ENCODE measurements at regions of chr4 and their contacts with region 1.

Region 1: DNA sequence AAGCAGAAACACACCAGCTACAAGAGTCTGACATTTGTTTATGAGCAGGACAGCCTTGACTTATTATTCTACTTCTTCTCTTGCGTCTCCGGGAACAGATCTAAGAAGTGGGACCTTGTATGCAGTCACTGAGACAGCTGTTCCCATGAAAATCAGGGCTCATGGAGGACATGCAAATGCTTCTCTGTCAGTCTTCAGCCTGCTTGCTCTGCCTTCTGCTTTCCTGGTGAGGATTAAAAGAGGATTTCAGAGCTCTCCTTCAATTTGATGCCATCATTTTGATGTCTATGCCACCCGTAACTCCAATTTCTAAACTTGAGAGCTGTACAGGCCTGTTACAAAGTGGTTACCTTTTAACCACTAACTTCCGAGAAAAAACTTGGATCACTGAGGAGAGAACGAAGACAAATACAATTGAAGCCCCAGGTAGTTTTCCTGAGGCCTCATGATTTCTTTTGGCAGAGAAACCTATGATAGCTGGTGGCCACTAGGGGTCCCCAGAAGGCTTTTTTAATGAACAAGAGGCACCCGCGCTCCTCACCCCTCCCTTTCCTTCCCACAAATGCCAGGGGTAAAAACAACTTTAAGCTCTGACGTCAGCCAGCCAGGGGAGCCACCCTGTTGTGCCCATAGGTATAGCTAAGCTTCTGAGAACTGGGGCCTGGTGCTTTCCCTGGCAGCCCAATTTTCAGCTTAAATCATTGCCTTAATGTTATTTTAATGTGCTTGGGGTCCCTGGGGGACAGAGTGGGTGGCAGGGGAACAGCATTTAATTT is 97.0 kb downstream of the DDIT4L start:
- DNase-seq: peak; percentile 97
- H3K4me3 Mint-ChIP-seq: no peak overlapping the region
- H3K27ac Mint-ChIP-seq: peak overlapping the region; percentile 73
- H3K4me1 Mint-ChIP-seq: peaks cover 62% of the 10 kb centered on the region
- H3K27me3 Mint-ChIP-seq: peaks cover 2% of the 10 kb centered on the region

Region 2: GRCh38 chr4:98573791-98574190 is 1519.5 kb before region 1 on chr4:
- CTCF ChIA-PET with region 1: no interaction called
- intact Hi-C with region 1: no loop called
- DNase-seq: no peak
- H3K4me3 Mint-ChIP-seq: no peak overlapping the region
- H3K27ac Mint-ChIP-seq: no peak overlapping the region
- H3K4me1 Mint-ChIP-seq: peaks cover 42% of the 10 kb centered on the region
- H3K27me3 Mint-ChIP-seq: no peaks in the 10 kb centered on the region

Region 3: GRCh38 chr4:99998062-99998867 is 95.0 kb before region 1 on chr4:
- CTCF ChIA-PET with region 1: interaction called, 7 read pairs
- intact Hi-C with region 1: loop called (anchors 1 kb)
- DNase-seq: peak; percentile 10
- H3K4me3 Mint-ChIP-seq: no peak overlapping the region
- H3K27ac Mint-ChIP-seq: peak overlapping the region; percentile 59
- H3K4me1 Mint-ChIP-seq: peaks cover 11% of the 10 kb centered on the region
- H3K27me3 Mint-ChIP-seq: peaks cover 5% of the 10 kb centered on the region

Region 4: GRCh38 chr4:100302061-100303026 is 209.1 kb after region 1 on chr4:
- CTCF ChIA-PET with region 1: no interaction called
- intact Hi-C with region 1: loop called (anchors 5 kb)
- DNase-seq: no peak
- H3K4me3 Mint-ChIP-seq: no peak overlapping the region
- H3K27ac Mint-ChIP-seq: no peak overlapping the region
- H3K4me1 Mint-ChIP-seq: no peaks in the 10 kb centered on the region
- H3K27me3 Mint-ChIP-seq: peaks cover 2% of the 10 kb centered on the region

Region 5: DNA sequence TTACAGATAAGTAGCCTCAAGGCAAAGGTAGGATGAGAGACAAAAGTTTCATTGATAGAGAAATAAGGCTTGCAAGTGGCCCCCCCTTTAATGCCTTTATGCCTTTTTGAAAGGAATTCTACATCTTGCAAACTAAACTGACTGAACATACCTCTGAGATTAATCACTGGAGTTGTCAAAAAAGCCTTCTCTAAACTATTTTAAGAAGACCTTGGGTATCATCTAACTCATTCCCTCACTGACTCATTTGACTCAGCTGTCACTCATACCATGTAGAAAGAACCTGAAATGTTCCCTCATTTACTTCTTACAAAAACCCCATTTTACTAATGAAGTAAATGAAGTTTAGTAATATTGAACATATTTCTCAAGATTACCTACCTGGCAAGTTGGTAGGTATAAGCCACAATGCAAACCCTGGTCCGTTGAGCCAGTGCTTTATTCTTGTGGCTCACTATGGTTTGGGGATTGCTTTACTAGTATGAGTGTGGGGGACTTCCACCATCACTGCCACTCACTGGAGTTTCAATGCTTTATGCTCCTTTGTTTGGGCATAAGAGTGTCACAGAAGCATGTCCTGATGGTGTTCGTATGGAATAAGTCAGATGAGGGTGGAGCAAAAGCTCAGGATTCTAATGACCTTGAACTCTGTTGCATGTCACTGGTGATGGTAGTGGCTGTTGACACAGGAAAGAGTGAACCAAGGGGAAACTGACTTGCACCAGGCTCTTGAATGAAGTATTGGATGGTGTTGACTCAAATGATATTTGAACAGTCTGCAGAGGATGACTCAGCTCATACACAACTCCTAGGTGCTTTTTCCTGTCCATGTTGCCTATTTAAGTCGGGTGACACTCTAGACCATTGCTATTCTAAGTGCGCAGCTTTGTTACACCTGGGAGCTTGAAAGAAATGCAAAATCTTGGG is 730.0 kb after region 1 on chr4:
- CTCF ChIA-PET with region 1: no interaction called
- intact Hi-C with region 1: loop called (anchors 1 kb)
- DNase-seq: peak; percentile 53
- H3K4me3 Mint-ChIP-seq: no peak overlapping the region
- H3K27ac Mint-ChIP-seq: peak overlapping the region; percentile 82
- H3K4me1 Mint-ChIP-seq: peaks cover 9% of the 10 kb centered on the region
- H3K27me3 Mint-ChIP-seq: peaks cover under 1% of the 10 kb centered on the region

Region 6: GRCh38 chr4:101347557-101348366 is 1254.5 kb after region 1 on chr4:
- CTCF ChIA-PET with region 1: no interaction called
- intact Hi-C with region 1: loop called (anchors 5 kb)
- DNase-seq: peak; percentile 99
- H3K4me3 Mint-ChIP-seq: peak overlapping the region; percentile 95
- H3K27ac Mint-ChIP-seq: peak overlapping the region; percentile 82
- H3K4me1 Mint-ChIP-seq: peaks cover 22% of the 10 kb centered on the region
- H3K27me3 Mint-ChIP-seq: peaks cover 31% of the 10 kb centered on the region

Region 7: GRCh38 chr4:101596781-101597552 is 1503.7 kb after region 1 on chr4:
- CTCF ChIA-PET with region 1: no interaction called
- intact Hi-C with region 1: loop called (anchors 2 kb)
- DNase-seq: peak; percentile 33
- H3K4me3 Mint-ChIP-seq: no peak overlapping the region
- H3K27ac Mint-ChIP-seq: no peak overlapping the region
- H3K4me1 Mint-ChIP-seq: no peaks in the 10 kb centered on the region
- H3K27me3 Mint-ChIP-seq: peaks cover 1% of the 10 kb centered on the region